Left cardiac atrium (tissue), 4 donors: ENCODE measurements at regions of chr13 and their contacts with region 1.

Region 1: GRCh38 chr13:98033277-98034247 is 80.1 kb downstream of the IPO5 start:
- DNase-seq: no peak
- ATAC-seq: peak in 1 of 2 donors; percentile 35

Region 2: GRCh38 chr13:98653463-98653985 is 620.0 kb after region 1 on chr13:
- intact Hi-C with region 1: loop called in 1 of 2 experiments (anchors 10 kb)
- DNase-seq: peak; percentile 83
- ATAC-seq: peak; percentile 85 to 87